A673 (cell line): ENCODE measurements at regions of chr12 and their contacts with region 1.

Region 1: GRCh38 chr12:119412811-119413794 is 78.6 kb downstream of the CCDC60 start:
- DNase-seq: peak; percentile 60
- H3K4me3 ChIP-seq: no peak overlapping the region
- H3K27ac ChIP-seq: no peak overlapping the region
- H3K4me1 ChIP-seq: no peaks in the 10 kb centered on the region
- H3K27me3 ChIP-seq: no peaks in the 10 kb centered on the region
- CTCF ChIP-seq: peak; percentile 91

Region 2: DNA sequence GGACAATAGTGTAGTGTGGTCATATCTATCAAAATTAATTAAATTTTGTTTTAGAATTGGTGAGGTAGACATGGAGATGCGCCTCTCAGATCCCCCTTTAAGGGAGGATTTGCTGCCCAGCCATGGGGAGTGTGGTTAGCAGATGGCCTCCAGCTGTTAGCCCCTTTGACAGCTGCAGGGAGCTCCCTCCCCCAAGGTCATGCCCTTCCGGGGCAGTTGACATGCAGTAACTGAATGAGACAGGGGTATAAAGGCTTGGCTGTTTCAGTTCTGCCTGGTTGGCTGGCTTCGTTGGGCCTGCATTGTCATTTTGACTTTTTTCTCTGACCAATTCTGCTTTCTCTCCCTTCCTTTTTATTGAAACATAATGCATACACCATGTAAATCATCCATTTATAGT is 723.3 kb before region 1 on chr12:
- CTCF ChIA-PET with region 1: no interaction called
- POLR2A ChIA-PET with region 1: no interaction called
- intact Hi-C with region 1: loop called (anchors 10 kb)
- DNase-seq: no peak
- H3K4me3 ChIP-seq: no peak overlapping the region
- H3K27ac ChIP-seq: no peak overlapping the region
- H3K4me1 ChIP-seq: no peaks in the 10 kb centered on the region
- H3K27me3 ChIP-seq: no peaks in the 10 kb centered on the region
- CTCF ChIP-seq: no peak

Region 3: DNA sequence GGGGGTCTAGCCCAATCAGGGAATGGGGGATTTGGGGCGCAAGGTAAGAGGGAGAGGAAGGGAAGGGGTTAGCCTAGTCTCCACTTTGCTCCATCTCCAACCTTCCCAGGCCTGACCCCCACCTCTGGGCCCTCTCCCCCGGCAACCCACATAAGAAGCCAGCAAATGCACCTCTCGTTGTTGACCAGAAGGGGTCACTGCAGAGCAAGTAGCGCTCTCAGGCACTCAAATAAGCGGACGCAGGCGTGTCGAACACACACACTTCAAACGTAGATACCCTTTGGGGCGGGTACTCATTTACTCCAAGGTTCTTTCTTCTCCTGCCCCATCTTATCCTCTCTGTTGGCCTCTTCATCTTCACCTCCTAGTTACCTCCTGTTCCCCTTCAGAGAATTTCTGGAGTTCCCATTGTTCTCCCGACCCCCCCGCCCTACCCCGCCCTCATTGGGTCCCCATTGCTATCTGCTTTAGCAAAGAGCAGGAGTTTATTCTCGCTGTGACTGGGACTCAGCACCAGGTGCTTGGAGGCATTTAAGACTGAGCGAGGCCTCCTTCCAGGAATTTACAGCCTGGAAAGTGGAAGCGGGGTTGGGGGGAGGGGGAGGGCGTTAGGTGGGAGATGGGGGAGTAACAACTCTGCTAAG is 433.2 kb before region 1 on chr12:
- CTCF ChIA-PET with region 1: no interaction called
- POLR2A ChIA-PET with region 1: no interaction called
- intact Hi-C with region 1: loop called (anchors 5 kb)
- DNase-seq: peak; percentile 79
- H3K4me3 ChIP-seq: no peak overlapping the region
- H3K27ac ChIP-seq: no peak overlapping the region
- H3K4me1 ChIP-seq: no peaks in the 10 kb centered on the region
- H3K27me3 ChIP-seq: peaks cover 53% of the 10 kb centered on the region
- CTCF ChIP-seq: peak; percentile 86

Region 4: DNA sequence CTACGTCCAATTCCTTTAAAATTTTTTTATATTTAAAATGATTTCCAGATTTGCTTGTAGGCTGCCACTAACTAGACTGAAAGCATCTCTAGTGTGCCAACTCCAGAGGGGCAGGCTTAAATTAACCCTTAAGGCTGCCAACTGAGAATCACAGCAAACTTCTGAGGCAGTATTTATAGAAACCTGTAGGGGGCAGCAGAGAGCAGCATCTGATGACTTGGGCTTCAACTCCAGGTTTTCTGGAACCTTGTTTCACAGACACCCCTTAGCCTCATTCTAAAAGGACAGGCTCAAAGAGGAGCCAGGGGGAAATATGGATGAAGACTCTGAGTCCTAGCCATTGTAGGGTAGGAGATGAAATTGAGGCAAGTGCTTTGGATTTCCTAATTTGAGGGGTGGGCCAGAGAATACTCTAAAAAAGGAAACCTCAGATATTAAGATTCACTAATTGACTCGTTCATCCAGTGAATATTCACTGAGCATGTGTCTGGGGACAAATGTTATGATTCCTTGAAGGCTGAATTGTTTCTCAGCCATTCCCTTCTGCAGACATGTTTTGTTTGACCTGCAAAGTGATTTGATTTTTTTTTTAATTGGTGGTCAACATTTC is 297.7 kb before region 1 on chr12:
- CTCF ChIA-PET with region 1: interaction called, 6 read pairs
- POLR2A ChIA-PET with region 1: no interaction called
- intact Hi-C with region 1: loop called (anchors 2 kb)
- DNase-seq: peak; percentile 66
- H3K4me3 ChIP-seq: no peak overlapping the region
- H3K27ac ChIP-seq: no peak overlapping the region
- H3K4me1 ChIP-seq: no peaks in the 10 kb centered on the region
- H3K27me3 ChIP-seq: peaks cover 31% of the 10 kb centered on the region
- CTCF ChIP-seq: peak; percentile 89

Region 5: DNA sequence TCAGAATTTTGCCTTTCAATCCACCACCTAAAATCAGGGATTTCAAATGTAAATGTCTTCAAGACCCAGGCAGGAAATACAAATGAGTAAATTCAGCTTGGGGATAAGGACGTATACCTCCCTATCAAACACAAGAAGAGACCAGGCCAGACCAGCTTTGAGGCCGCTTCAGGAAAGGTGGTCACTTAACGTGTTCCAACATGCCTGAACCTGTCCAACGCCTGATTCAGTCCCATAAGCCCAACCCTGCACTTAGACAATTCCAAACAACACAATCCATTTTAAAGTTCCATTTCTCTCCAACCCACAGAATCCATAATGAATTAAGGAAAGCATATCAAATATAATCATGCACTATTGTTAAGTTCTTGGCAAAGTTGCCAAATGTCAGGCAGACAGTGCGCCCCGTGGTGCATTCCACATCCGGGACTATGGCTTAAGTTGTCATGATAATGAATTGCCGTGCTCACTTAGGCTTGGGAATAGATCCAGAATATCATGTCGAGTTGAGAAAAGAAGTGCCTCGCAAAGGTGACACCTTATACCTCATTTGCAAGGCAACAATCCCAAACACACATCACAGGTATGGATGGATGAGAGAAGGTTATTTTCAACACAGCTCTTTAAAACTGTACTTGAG is 43.1 kb before region 1 on chr12:
- CTCF ChIA-PET with region 1: no interaction called
- POLR2A ChIA-PET with region 1: no interaction called
- intact Hi-C with region 1: no loop called
- DNase-seq: peak; percentile 71
- H3K4me3 ChIP-seq: no peak overlapping the region
- H3K27ac ChIP-seq: no peak overlapping the region
- H3K4me1 ChIP-seq: peaks cover 14% of the 10 kb centered on the region
- H3K27me3 ChIP-seq: no peaks in the 10 kb centered on the region
- CTCF ChIP-seq: no peak

Region 6: DNA sequence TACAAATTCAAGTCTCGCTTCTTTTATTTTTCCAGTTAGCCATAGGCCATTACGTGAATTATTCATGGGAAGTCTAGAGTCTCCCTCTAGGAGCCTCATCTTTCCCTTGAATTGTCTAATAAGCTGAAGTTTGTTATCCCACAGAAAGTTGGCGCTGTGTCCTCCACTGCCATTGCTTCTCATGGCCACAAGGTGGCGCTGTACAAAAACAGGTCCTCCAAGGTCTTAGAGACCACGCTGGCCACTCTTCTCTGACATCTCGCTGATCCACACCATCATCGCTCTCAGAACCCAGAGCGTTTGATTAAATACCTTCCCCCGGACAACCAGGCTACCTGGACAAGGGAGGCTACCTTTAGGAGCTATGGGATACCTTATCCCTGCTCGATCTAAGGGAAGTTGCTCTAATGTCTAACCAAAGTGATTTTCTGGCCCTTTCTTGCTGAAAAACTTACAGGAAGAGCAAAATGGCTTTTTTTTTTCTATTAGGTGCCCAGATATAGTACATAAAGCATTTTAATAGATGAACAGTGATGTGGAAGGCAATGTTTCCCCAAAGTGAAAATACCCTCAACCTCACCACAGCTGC is 31.4 kb after region 1 on chr12:
- CTCF ChIA-PET with region 1: interaction called, 11 read pairs
- POLR2A ChIA-PET with region 1: no interaction called
- intact Hi-C with region 1: no loop called
- DNase-seq: peak; percentile 88
- H3K4me3 ChIP-seq: no peak overlapping the region
- H3K27ac ChIP-seq: no peak overlapping the region
- H3K4me1 ChIP-seq: no peaks in the 10 kb centered on the region
- H3K27me3 ChIP-seq: no peaks in the 10 kb centered on the region
- CTCF ChIP-seq: peak; percentile 99